Calu3 (cell line): ENCODE measurements at regions of chr6 and their contacts with region 1.

Region 1: GRCh38 chr6:127786109-127786508 is 114.7 kb downstream of the THEMIS start:
- DNase-seq: no peak
- H3K4me3 Mint-ChIP-seq: no peak overlapping the region
- H3K27ac Mint-ChIP-seq: no peak overlapping the region
- H3K4me1 Mint-ChIP-seq: no peaks in the 10 kb centered on the region
- H3K27me3 Mint-ChIP-seq: peaks cover 9% of the 10 kb centered on the region
- CTCF ChIP-seq: no peak

Region 2: GRCh38 chr6:127592964-127593363 is 193.1 kb before region 1 on chr6:
- CTCF ChIA-PET with region 1: no interaction called
- intact Hi-C with region 1: no loop called
- DNase-seq: no peak
- H3K4me3 Mint-ChIP-seq: no peak overlapping the region
- H3K27ac Mint-ChIP-seq: no peak overlapping the region
- H3K4me1 Mint-ChIP-seq: no peaks in the 10 kb centered on the region
- H3K27me3 Mint-ChIP-seq: no peaks in the 10 kb centered on the region
- CTCF ChIP-seq: no peak

Region 3: DNA sequence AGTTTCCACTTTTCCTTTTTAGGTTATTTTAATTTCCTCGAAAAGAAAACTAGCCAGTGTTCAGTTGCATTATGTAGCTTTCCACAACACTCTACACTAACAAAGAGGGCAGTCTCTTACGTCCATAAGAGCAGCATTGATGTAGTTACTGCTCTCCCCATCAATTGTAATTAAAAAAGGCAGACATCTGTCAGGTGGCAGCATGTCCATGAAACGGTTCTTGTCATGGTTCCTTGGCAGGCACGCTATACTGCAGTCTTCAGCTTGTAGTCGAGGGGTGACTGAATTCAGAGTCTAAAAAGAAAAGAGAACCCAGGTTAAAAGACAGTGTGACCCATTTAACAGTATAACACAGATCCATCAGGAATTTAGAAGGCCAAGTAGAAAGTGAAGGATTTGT is 194.9 kb after region 1 on chr6:
- CTCF ChIA-PET with region 1: interaction called, 13 read pairs
- intact Hi-C with region 1: no loop called
- DNase-seq: no peak
- H3K4me3 Mint-ChIP-seq: no peak overlapping the region
- H3K27ac Mint-ChIP-seq: no peak overlapping the region
- H3K4me1 Mint-ChIP-seq: no peaks in the 10 kb centered on the region
- H3K27me3 Mint-ChIP-seq: no peaks in the 10 kb centered on the region
- CTCF ChIP-seq: no peak

Region 4: DNA sequence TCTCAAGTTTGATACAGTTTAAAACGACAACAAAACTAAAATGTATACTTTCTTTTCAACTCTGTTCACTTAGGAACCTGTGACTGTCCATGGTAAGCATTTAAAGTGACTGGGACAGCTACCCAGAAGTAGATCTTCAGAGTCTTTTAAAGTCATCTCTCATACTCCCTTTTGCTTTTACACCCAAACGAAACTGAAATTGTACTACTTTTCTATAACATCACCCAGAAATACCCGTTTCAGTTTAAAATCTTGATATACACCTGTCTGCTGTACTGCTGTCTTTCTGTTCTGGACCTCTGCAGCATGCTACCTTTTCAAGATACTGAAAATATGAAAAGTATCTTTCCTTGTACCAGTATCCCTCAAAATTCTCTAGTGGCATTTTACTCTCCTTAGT is 285.1 kb after region 1 on chr6:
- CTCF ChIA-PET with region 1: no interaction called
- intact Hi-C with region 1: no loop called
- DNase-seq: no peak
- H3K4me3 Mint-ChIP-seq: no peak overlapping the region
- H3K27ac Mint-ChIP-seq: peak overlapping the region; percentile 67
- H3K4me1 Mint-ChIP-seq: peaks cover 19% of the 10 kb centered on the region
- H3K27me3 Mint-ChIP-seq: no peaks in the 10 kb centered on the region
- CTCF ChIP-seq: no peak

Region 5: GRCh38 chr6:128172752-128173682 is 386.9 kb after region 1 on chr6:
- CTCF ChIA-PET with region 1: no interaction called
- intact Hi-C with region 1: no loop called
- DNase-seq: no peak
- H3K4me3 Mint-ChIP-seq: no peak overlapping the region
- H3K27ac Mint-ChIP-seq: peak overlapping the region; percentile 5
- H3K4me1 Mint-ChIP-seq: peaks cover 24% of the 10 kb centered on the region
- H3K27me3 Mint-ChIP-seq: no peaks in the 10 kb centered on the region
- CTCF ChIP-seq: no peak